K562 (cell line): ENCODE measurements at regions of chr14 and their contacts with region 1.

Region 1: GRCh38 chr14:58082491-58083098 is 69.4 kb downstream of the ARMH4 start:
- DNase-seq: peak in 3 of 4 experiments; percentile 4 to 18 (median 13)
- ATAC-seq: peak; percentile 49; the same call in 1 of the 3 replicates
- H3K4me3 ChIP-seq: no peak overlapping the region
- H3K27ac ChIP-seq: no peak overlapping the region; the same call in 2 of the 3 replicates
- H3K4me1 ChIP-seq: no peaks in the 10 kb centered on the region; a peak in 1 of 5 replicates
- H3K27me3 ChIP-seq: no peaks in the 10 kb centered on the region
- CTCF ChIP-seq: no peak
- EP300 ChIP-seq: no peak
- POLR2A ChIP-seq: no peak
- RAD21 ChIP-seq: no peak

Region 2: GRCh38 chr14:57486767-57487379 is 595.7 kb before region 1 on chr14:
- CTCF ChIA-PET with region 1: no interaction called
- POLR2A ChIA-PET with region 1: no interaction called
- in situ Hi-C with region 1: loop called (anchors 10 kb)
- intact Hi-C with region 1: no loop called
- DNase-seq: peak; percentile 5 to 20 (median 12)
- ATAC-seq: no peak
- H3K4me3 ChIP-seq: no peak overlapping the region
- H3K27ac ChIP-seq: no peak overlapping the region
- H3K4me1 ChIP-seq: no peaks in the 10 kb centered on the region
- H3K27me3 ChIP-seq: no peaks in the 10 kb centered on the region
- CTCF ChIP-seq: peak; percentile 30 to 52 (median 46); a peak in 4 of 6 replicates
- EP300 ChIP-seq: no peak
- POLR2A ChIP-seq: no peak
- RAD21 ChIP-seq: peak; percentile 34 to 46

Region 3: DNA sequence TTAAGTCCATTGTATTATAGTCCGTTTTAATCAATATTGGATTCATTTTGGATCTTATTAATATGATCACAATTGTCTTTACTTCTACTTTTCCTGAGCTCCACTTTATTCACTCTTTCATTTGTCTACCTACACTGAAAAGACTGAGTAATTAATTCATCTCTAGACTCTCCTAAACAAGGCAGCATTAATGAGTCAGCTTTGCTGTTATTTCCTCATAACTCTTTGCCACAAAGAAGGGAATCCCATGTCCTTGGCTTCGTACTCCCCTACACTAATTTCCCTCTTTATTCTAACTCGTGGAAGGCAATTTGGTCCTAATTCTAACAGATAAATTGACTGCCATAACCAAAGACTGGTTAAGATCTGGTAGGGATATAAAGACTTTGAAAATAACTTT is 22.5 kb before region 1 on chr14:
- CTCF ChIA-PET with region 1: no interaction called
- POLR2A ChIA-PET with region 1: no interaction called
- in situ Hi-C with region 1: no loop called
- intact Hi-C with region 1: no loop called
- DNase-seq: no peak
- ATAC-seq: no peak
- H3K4me3 ChIP-seq: no peak overlapping the region
- H3K27ac ChIP-seq: no peak overlapping the region
- H3K4me1 ChIP-seq: no peaks in the 10 kb centered on the region
- H3K27me3 ChIP-seq: no peaks in the 10 kb centered on the region; a peak in 1 of 5 replicates
- CTCF ChIP-seq: no peak
- EP300 ChIP-seq: no peak
- POLR2A ChIP-seq: no peak
- RAD21 ChIP-seq: no peak